Panc1 (cell line): ENCODE measurements at regions of chr1 and their contacts with region 1.

Region 1: GRCh38 chr1:52002038-52002917 is 11.8 kb upstream of the RAB3B start:
- DNase-seq: peak; percentile 93
- ATAC-seq: peak; percentile 99
- H3K4me3 ChIP-seq: no peak overlapping the region
- H3K27ac ChIP-seq: no peak overlapping the region
- H3K4me1 ChIP-seq: no peaks in the 10 kb centered on the region
- H3K27me3 ChIP-seq: no peaks in the 10 kb centered on the region
- CTCF ChIP-seq: peak; percentile 87

Region 2: GRCh38 chr1:51819810-51820209 is 182.5 kb before region 1 on chr1:
- CTCF ChIA-PET with region 1: interaction called, 10 read pairs
- POLR2A ChIA-PET with region 1: no interaction called
- in situ Hi-C with region 1: no loop called
- intact Hi-C with region 1: no loop called
- DNase-seq: no peak
- ATAC-seq: no peak
- H3K4me3 ChIP-seq: no peak overlapping the region
- H3K27ac ChIP-seq: no peak overlapping the region
- H3K4me1 ChIP-seq: no peaks in the 10 kb centered on the region
- H3K27me3 ChIP-seq: no peaks in the 10 kb centered on the region
- CTCF ChIP-seq: no peak

Region 3: GRCh38 chr1:51897699-51898031 is 104.6 kb before region 1 on chr1:
- CTCF ChIA-PET with region 1: no interaction called
- POLR2A ChIA-PET with region 1: no interaction called
- in situ Hi-C with region 1: no loop called
- intact Hi-C with region 1: loop called (anchors 1 kb)
- DNase-seq: peak; percentile 78
- ATAC-seq: peak; percentile 69
- H3K4me3 ChIP-seq: no peak overlapping the region
- H3K27ac ChIP-seq: no peak overlapping the region
- H3K4me1 ChIP-seq: peaks cover 3% of the 10 kb centered on the region; the same call in 1 of the 2 replicates
- H3K27me3 ChIP-seq: no peaks in the 10 kb centered on the region
- CTCF ChIP-seq: no peak